Left ventricle myocardium inferior (tissue), 1 donor: ENCODE measurements at regions of chr10 and their contacts with region 1.

Region 1: DNA sequence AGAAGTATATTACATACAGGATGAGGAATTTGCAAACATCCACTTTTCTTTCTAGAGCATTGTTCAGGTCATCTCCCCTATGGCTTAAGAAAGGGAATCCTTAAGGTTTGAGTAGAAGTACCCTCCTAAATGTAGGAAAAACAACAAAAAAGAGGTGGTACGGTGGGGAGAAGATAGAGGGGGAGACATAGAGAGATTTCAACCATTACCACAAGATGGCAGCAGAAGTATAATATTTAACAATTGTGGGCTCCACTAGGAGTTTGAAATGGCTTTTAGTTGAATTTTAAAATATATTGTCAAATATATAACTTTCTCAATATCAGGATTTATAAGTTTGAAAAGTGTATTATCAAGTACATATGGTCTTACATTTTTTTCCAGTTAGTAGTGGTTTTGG is 72.7 kb upstream of the PRKG1 start:
- DNase-seq: no peak
- H3K4me3 ChIP-seq: no peak overlapping the region
- H3K27ac ChIP-seq: peak overlapping the region; percentile 50
- H3K4me1 ChIP-seq: peaks cover 39% of the 10 kb centered on the region
- H3K27me3 ChIP-seq: no peaks in the 10 kb centered on the region
- CTCF ChIP-seq: peak; percentile 73

Region 2: DNA sequence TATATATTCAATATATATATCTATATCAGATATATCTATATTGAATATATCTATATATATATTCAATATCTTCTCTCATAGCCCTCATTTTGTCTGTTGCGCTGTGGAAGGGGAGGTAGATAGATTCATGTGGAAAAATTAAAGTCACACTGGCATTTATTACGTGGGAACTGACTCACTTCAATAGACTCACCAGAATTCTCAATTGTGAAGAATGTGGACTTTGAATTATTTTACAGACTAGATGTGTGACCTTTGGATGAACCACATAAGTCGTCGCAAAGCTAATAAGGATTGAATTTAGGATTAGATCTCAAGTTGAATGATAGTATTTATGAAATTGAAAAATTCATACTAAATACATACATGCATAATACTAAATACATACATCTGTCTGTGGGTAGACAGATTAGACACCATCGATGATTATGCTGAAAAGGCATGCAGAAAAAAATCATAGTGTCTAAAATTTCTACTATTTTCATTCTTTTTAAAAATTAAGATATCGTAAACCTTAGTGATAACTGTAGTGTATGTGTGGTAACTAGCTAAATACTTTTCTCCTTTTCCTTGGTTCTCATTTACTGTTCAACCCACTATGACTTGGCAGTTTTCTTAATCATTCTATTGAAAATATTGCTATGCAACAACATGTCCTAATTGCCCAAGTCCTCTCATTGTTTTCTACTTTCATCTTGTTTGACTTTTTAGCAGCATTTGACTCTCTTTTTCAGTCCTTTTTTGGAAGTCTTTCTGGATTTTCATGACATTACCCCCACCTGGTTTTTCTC is 54.4 kb before region 1 on chr10:
- intact Hi-C with region 1: no loop called
- DNase-seq: no peak
- H3K4me3 ChIP-seq: no peak overlapping the region
- H3K27ac ChIP-seq: no peak overlapping the region
- H3K4me1 ChIP-seq: peaks cover 9% of the 10 kb centered on the region
- H3K27me3 ChIP-seq: no peaks in the 10 kb centered on the region
- CTCF ChIP-seq: no peak

Region 3: DNA sequence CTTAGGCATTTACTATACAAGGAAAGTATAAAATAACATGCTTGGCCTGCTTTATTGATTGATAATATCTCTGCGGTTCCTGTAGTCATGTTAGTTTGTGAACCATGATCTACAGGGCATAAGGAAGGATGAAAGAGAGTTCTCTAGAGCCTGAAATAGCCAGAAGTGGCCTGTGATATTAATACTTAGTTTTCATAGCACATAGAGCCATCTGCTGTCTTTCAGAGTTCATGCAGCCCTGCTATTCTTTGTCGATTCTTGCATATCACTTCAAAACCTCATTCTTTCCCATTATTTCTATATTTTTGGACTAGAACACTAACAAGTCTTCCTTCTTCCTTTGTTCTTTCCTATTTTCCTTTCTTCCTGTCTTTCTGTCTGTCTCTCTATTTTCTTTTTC is 46.3 kb after region 1 on chr10:
- intact Hi-C with region 1: no loop called
- DNase-seq: no peak
- H3K4me3 ChIP-seq: no peak overlapping the region
- H3K27ac ChIP-seq: peak overlapping the region; percentile 11
- H3K4me1 ChIP-seq: peaks cover 30% of the 10 kb centered on the region
- H3K27me3 ChIP-seq: no peaks in the 10 kb centered on the region
- CTCF ChIP-seq: peak; percentile 59

Region 4: DNA sequence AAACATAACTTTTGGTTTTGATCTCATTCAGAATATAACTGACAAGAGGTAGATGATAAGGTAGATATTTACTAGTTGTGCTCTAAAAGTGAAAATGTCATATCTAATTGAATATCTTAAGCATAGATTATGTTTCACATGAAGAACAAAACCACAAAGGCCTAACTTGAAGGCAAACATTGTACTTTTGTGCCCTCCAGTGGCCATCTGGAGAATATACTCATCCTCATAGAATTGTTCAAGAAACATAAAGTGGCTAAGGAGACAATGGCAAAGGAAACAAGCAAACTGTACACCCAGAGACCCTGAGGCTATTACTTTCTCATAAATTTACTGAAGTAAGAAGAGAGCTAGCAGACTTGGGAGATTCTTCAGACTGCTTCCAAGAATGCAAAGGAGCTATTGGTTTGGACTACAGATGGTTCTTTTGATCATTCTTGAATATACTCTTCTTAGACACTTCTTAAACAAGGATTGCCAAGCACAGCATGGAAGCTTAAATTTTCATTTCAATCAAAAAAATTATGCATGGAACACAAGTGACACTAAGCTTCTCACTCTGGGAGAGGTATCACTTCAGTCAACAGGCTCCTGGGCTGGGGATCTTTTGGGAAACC is 1214.3 kb after region 1 on chr10:
- intact Hi-C with region 1: loop called (anchors 5 kb)
- DNase-seq: no peak
- H3K4me3 ChIP-seq: no peak overlapping the region
- H3K27ac ChIP-seq: no peak overlapping the region
- H3K4me1 ChIP-seq: no peaks in the 10 kb centered on the region
- H3K27me3 ChIP-seq: no peaks in the 10 kb centered on the region
- CTCF ChIP-seq: peak; percentile 81